Ovary (tissue), 10 donors: ENCODE measurements at regions of chr3 and their contacts with region 1.

Region 1: DNA sequence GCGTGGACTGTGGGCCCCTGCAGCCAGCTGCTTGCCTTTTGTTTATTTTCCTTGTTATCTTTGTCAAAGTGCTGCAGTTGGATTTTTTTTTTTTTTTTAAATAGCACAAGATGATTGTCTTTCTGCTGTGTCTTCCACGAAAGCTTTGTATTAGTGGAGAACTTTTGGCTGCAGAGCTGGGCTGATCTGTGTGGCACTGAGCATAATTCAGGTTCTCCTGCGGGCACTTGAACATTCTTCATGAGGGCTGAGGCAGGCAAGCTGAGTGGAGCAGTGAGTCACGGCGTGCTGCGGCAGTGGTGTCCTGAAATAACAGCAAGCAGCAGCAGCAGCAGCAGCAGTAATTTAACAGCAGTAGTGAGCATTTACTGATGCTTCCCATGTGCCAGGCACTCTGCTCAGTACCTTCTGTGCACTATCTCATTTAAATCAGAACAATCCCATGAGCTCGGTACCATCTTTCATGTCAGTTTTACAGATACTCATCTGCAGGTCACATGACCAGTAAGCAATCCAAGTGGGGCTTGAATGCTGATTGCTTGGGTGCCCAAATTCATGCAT is 45.8 kb downstream of the MITF start:
- DNase-seq: peak; percentile 34 to 46 (median 43)
- H3K4me3 ChIP-seq: no peak overlapping the region
- H3K27ac ChIP-seq: peak overlapping the region in 1 of 2 donors; percentile 6
- H3K4me1 ChIP-seq: peaks cover 15% of the 10 kb centered on the region
- H3K27me3 ChIP-seq: no peaks in the 10 kb centered on the region
- CTCF ChIP-seq: no peak
- EP300 ChIP-seq: no peak
- POLR2A ChIP-seq: no peak

Region 2: DNA sequence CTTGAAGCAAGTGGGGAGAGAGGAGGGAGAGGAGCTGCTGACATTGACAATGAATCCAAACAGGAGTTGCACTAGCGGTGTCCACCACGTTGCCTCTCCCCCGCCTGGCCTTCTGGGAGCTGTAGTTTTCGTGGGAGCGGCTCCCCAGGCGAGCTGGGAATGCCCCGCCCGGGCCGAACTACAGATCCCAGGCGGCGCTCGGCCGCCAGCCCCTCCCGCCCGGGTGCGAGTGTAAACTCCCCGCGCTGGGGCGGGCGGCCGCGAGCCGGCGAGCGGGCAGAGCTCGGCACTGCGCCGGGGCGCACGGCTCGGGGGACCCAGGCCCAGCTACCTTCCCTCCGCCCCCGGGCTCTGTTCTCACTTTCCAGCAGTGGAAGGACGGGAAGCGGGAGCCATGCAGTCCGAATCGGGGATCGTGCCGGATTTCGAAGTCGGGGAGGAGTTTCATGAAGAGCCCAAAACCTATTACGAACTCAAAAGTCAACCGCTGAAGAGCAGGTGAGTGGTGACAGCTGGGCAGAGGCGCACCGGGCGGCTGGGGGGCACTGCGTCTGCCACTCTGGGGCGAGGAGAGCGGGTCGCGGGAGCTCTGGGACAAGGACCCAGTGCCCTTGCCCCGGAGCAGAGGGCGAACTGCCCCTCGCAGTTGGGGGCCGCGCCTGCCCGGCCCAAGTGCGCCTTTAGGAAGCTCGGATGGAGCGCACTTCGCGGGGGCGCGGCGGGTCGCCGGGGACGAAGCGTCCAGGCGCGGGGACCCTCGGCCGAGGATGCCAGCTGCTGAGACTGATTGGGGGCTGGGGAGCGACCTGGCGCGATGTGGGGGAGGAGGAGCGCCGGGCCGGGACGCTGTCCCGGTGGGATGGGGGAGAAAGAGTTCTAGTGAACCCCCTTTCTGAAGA is 45.6 kb before region 1 on chr3 and contains the start of gene MITF:
- intact Hi-C with region 1: loop called in 1 of 4 experiments (anchors 5 kb)
- DNase-seq: peak; percentile 92 to 94 (median 92)
- H3K4me3 ChIP-seq: peak within 1 kb of the TSS; percentile 70
- H3K27ac ChIP-seq: peak within 1 kb of the TSS; percentile 72 to 84
- H3K4me1 ChIP-seq: peaks cover 19% of the 10 kb centered on the region
- H3K27me3 ChIP-seq: no peaks in the 10 kb centered on the region
- CTCF ChIP-seq: no peak
- EP300 ChIP-seq: no peak
- POLR2A ChIP-seq: peak; percentile 72
- total RNA-seq, gene MITF: 19.7 to 38.0 (median 24.9) TPM